ENCODE measurements at regions of chr6 and their contacts with region 1.

Region 1: GRCh38 chr6:29016559-29017427 is 11.7 kb upstream of the ZNF311 start:
- DNase-seq: peak; percentile 88
- ATAC-seq: peak; percentile 93
- H3K4me3 ChIP-seq: peak overlapping the region; percentile 53
- H3K27ac ChIP-seq: no peak overlapping the region
- H3K4me1 ChIP-seq: peaks cover 8% of the 10 kb centered on the region
- H3K27me3 ChIP-seq: peaks cover 44% of the 10 kb centered on the region
- CTCF ChIP-seq: peak; percentile 76

Region 2: DNA sequence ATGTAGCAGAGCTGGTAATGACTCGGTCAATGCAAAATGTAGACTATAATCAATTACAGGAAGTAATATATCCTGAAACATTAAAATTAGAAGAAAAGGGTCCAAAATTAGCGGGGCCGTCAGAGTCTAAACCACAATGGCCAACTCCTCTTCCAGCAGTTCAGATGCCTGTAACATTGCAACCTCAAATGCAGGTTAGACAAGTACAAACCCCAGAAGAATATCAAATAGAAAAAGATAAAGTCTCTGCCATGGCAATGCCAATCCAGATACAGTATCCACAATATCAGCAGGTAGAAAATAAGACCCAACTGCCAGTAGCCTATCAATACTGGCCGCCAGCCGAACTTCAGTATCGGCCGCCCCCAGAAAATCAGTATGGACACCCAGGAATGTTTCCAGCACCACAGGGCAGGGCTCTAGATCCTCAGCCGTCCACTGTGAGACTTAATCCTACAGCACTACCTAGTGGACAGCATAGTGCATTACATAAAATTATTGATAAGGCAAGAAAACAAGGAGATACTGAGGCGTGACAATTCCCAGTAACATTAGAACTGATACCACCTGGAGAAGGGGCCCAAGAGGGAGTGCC is 332.8 kb before region 1 on chr6:
- intact Hi-C with region 1: loop called (anchors 10 kb)
- DNase-seq: no peak
- ATAC-seq: peak; percentile 89
- H3K4me3 ChIP-seq: no peak overlapping the region
- H3K27ac ChIP-seq: no peak overlapping the region
- H3K4me1 ChIP-seq: no peaks in the 10 kb centered on the region
- H3K27me3 ChIP-seq: peaks cover 71% of the 10 kb centered on the region
- CTCF ChIP-seq: peak; percentile 49

Region 3: DNA sequence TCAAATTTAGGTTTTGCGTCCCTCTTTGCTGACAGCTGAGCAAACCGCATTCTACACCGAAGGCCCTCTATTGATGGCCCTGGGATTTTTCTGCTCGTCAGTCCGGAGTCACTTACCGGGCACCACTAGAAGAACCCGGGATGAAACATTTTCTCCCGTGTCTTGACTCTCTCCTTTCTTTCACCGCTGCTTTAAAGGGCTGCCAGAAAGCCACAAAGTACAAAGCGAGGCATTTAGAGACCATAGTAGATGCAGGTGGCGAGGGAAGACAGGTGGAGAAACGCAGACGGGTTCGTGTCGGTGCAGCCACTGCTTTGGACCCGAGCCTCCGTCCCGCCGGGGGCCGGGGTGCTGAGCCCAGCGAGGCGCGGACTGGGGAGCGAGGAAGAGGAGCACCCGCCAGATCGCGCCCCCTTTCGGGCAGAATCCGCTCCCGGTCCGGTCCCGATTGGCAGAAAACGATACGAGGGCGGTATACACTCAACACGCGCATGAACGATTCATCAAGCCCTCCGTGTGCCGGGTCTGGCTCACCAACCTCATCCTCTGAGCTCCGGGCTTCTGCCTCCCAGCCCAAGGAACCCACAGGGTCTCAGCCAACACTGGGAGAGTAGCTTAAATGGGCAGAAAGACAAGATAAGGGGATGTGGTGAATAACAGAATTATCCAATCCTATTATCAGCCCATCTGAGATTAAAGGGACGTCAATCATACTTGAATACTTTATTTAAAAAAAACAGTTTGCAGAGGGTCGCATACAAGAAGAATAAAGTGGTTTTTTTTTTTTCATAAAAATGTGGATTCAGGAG is 178.0 kb before region 1 on chr6:
- intact Hi-C with region 1: loop called (anchors 5 kb)
- DNase-seq: peak; percentile 93
- ATAC-seq: peak; percentile 94
- H3K4me3 ChIP-seq: peak overlapping the region; percentile 73
- H3K27ac ChIP-seq: peak overlapping the region; percentile 43
- H3K4me1 ChIP-seq: peaks cover 8% of the 10 kb centered on the region
- H3K27me3 ChIP-seq: peaks cover 13% of the 10 kb centered on the region
- CTCF ChIP-seq: peak; percentile 60

Measured in upper lobe of right lung (tissue), 1 donor.